Activated T-helper 1 cell treated with anti-CD3 and anti-CD28 coated beads, Interleukin-12 subunit alpha, Interleukin-12 subunit beta, Interleukin-2, Interleukin-4 antibody, amounts not matched to agents 30 ng/mL and 10 ng/mL and 1 ng/mL, durations not matched to agents 14 hours and 24 hours and 36 hours (primary cell): ENCODE measurements at regions of chr6 and their contacts with region 1.

Region 1: DNA sequence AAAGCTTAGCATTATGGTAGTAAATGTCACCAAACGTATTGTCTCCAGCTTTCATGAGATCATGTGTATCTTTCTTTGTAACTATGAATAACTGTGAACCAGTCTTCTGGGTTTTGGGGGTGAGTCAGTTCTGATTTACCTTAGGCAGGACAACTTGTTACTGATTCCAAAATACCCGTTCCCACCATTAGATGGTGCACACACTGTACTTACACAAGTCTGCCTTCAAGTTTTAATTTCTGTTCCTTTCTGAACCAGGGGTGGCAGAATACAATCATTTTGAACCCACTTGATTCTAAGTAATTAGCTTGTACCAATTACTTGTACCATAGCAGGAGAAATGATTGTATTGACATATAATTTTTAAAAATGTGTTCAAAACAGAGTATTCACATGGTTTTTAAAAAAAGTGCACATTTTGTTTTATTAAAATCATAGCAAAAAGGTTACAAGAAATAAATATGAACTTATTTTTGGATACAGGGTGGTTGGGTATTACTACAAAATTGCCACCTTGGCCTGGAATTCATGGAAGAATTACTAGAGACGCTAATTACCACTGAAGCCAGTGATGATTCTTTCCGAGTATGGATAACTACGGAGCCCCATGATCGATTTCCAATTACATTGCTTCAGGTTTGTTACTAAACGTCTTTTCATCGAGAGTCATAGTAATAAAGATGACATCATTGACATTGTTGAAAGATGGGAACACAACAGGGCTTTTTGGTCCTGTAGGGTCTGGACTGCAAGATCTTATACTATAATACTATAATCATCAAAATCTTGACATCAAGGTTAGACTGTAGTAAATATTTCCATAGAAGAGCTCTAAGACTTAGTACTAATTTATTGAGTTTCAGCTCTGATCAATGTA is 75.2 kb upstream of the GLP1R start:
- DNase-seq: no peak
- H3K4me3 Mint-ChIP-seq: no peak overlapping the region
- H3K27ac Mint-ChIP-seq: no peak overlapping the region
- H3K4me1 Mint-ChIP-seq: no peaks in the 10 kb centered on the region
- H3K27me3 Mint-ChIP-seq: peaks cover 18% of the 10 kb centered on the region

Region 2: GRCh38 chr6:39102071-39102820 is 128.8 kb after region 1 on chr6:
- intact Hi-C with region 1: loop called (anchors 5 kb)
- DNase-seq: no peak
- H3K4me3 Mint-ChIP-seq: no peak overlapping the region
- H3K27ac Mint-ChIP-seq: no peak overlapping the region
- H3K4me1 Mint-ChIP-seq: peaks cover 14% of the 10 kb centered on the region
- H3K27me3 Mint-ChIP-seq: peaks cover 6% of the 10 kb centered on the region

Region 3: DNA sequence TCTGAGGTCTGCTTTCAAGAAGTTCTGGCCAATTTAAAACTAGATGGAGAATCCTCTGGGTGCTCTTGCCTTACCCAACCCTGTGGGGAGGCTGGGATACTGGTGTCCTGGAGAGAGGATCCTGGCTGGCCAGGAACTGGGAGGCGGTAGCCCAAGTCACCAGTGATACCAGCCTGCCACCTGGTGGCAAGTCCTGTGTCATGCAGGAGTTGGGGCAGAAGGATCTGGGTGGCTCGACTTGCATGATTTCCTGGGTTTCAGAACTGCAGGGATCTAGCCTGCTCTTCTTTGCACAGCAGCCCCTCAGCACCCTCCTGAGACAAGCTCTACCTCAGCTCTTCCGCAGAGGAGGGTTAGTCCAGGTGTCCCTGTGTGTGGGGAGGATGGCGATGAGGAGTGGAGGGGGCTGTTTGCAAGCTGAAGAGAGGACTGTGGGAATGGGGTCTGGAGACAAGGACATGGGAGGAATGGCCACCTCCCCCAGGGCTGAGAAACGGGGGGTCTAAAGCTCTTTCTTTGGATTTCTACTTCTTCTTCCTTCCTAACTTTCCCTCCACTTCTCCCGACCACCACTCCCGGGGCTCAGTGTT is 336.6 kb after region 1 on chr6:
- intact Hi-C with region 1: loop called (anchors 1 kb)
- DNase-seq: peak; percentile 38
- H3K4me3 Mint-ChIP-seq: no peak overlapping the region
- H3K27ac Mint-ChIP-seq: no peak overlapping the region
- H3K4me1 Mint-ChIP-seq: no peaks in the 10 kb centered on the region
- H3K27me3 Mint-ChIP-seq: peaks cover 28% of the 10 kb centered on the region